ENCODE measurements at regions of chr17 and their contacts with region 1.

Region 1: DNA sequence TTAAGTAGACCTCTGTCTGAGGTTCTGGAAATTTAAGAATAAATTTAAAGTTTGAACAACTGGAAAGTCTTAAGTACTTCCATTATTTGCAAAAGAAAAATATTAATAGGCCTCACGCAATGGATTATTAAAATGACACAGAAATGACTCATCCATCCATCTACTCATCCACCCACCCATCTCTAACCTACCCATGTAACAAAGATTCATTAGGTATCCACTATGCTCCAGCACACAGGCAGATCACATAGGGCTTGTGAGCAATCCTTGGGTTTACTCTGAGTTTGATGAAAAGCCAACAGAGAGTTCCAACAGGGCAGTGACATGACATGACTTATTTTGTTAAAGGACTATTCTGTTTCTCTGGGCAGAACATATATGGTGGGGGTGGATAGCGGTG is 93.3 kb downstream of the HELZ start:
- DNase-seq: no peak
- ATAC-seq: no peak
- H3K4me3 Mint-ChIP-seq: no peak overlapping the region
- H3K27ac Mint-ChIP-seq: no peak overlapping the region
- H3K4me1 Mint-ChIP-seq: no peaks in the 10 kb centered on the region
- H3K27me3 Mint-ChIP-seq: no peaks in the 10 kb centered on the region
- CTCF ChIP-seq: no peak

Region 2: DNA sequence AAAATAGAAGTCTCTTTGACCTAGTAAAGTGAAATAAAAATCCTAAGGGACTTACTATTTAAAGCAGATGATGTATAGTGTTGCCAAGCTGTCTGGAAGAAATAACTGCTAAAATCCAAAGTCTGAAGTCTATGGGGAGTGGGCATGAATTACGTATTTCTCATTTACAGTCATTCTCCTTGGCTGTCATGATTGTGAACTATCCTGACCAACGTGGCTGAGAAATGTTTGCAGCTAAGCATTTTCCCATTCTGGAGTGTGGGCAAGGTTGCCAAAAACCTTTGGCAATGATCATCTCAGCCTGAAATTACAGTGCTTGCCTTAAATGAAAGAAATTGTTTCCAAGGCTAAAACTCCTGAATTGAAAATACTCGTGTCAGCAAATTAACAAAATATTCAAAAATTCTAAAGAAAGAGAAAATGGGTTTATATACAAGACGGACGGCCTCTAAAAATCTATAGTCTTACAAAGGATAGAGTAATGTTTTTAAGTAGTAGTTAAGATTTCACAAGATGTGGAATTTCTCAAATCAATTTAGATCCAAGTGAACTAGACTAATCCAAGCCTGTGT is 30.3 kb before region 1 on chr17:
- CTCF ChIA-PET with region 1: no interaction called
- POLR2A ChIA-PET with region 1: no interaction called
- intact Hi-C with region 1: no loop called
- DNase-seq: no peak
- ATAC-seq: no peak
- H3K4me3 Mint-ChIP-seq: no peak overlapping the region
- H3K27ac Mint-ChIP-seq: no peak overlapping the region
- H3K4me1 Mint-ChIP-seq: no peaks in the 10 kb centered on the region
- H3K27me3 Mint-ChIP-seq: no peaks in the 10 kb centered on the region
- CTCF ChIP-seq: no peak

Region 3: DNA sequence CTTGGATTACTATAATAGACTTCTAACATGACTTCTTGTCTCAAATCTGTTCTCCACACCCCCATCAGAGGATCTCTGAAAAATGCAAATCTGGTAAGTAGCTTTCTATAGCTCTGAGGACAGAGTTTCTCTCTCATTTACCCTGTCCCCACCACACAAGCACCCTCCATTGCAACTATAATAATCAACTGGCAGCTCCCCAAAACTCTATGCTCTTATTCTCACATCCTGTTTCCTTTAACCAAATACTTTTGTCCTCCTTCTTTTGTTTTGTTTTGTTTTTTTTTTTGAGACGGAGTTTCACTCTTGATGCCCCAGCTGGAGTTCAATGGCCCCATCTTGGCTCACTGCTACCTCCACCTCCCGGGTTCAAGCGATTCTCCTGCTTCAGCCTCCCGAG is 19.8 kb after region 1 on chr17:
- CTCF ChIA-PET with region 1: no interaction called
- POLR2A ChIA-PET with region 1: interaction called, 10 read pairs
- intact Hi-C with region 1: no loop called
- DNase-seq: no peak
- ATAC-seq: no peak
- H3K4me3 Mint-ChIP-seq: no peak overlapping the region
- H3K27ac Mint-ChIP-seq: no peak overlapping the region
- H3K4me1 Mint-ChIP-seq: peaks cover 6% of the 10 kb centered on the region
- H3K27me3 Mint-ChIP-seq: no peaks in the 10 kb centered on the region
- CTCF ChIP-seq: no peak

Measured in activated B cell treated with CpG ODN at 0.5 μM for 24 hours (primary cell).